Gastrocnemius medialis (tissue), 4 donors: ENCODE measurements at regions of chr12 and their contacts with region 1.

Region 1: GRCh38 chr12:120849765-120850164 is 54.4 kb downstream of the SPPL3 start:
- DNase-seq: peak; percentile 50 to 61
- ATAC-seq: peak; percentile 69 to 84
- H3K4me3 ChIP-seq: no peak overlapping the region
- H3K27ac ChIP-seq: peak overlapping the region; percentile 78 to 89 (median 83)
- H3K4me1 ChIP-seq: peaks cover 79 to 81% of the 10 kb centered on the region in 2 donors
- H3K27me3 ChIP-seq: no peaks in the 10 kb centered on the region
- CTCF ChIP-seq: no peak
- POLR2A ChIP-seq: peak in 1 of 2 donors; percentile 32

Region 2: DNA sequence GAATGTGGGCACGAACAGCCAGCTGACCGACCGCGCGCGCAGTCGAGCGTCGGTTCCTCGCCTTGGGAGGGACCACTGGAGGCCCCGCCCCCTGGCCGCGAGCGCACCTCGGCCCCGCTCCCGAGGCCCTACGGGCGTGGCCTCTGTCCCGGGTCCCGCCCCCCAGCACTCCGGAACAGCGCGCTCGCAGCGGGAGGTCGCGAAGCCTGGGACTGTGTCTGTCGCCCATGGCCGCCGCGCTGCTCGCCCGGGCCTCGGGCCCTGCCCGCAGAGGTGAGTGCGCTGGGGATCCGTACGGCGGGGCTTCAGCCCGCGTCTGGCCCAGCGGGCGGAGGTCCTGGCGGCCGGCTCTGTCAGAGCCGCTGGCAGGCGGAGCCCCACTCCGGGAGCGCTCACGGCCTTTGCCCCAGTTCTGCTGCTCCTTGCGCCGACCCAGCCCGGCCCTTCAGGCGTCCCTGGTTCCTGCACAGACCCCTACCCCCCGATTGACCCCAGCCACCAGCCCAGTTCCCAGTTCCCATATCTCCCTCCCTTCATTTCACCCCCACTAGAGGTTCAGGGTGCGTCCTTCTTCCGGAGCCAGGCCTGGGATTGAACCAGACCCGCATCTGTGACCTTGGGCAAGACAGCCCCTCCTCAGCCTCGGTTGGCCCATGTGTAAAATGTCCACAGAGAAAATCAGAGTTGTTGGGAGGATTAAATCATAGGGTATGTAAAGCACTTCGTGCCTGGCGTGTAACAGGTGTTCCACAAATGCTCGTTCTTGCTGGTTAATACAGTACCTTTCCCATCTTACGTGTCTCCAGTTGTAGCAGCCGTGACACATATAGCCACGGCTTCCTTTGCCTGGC is 123.9 kb before region 1 on chr12 and contains the start of gene ACADS:
- in situ Hi-C with region 1: no loop called
- intact Hi-C with region 1: loop called (anchors 5 kb)
- DNase-seq: peak; percentile 85 to 88
- ATAC-seq: peak; percentile 83 to 89
- H3K4me3 ChIP-seq: peak within 1 kb of the TSS; percentile 78 to 92 (median 86)
- H3K27ac ChIP-seq: peak within 1 kb of the TSS; percentile 92 to 96 (median 94)
- H3K4me1 ChIP-seq: peaks cover 16 to 30% of the 10 kb centered on the region in 2 donors
- H3K27me3 ChIP-seq: no peaks in the 10 kb centered on the region
- CTCF ChIP-seq: peak in 1 of 5 experiments; percentile 25
- POLR2A ChIP-seq: peak; percentile 86 to 88
- total RNA-seq, gene ACADS: 166 to 224 (median 200) TPM

Region 3: GRCh38 chr12:120833849-120834248 is 15.9 kb before region 1 on chr12:
- in situ Hi-C with region 1: no loop called
- intact Hi-C with region 1: loop called (anchors 2 kb)
- DNase-seq: peak; percentile 16 to 38
- ATAC-seq: peak; percentile 94 to 96
- H3K4me3 ChIP-seq: no peak overlapping the region
- H3K27ac ChIP-seq: peak overlapping the region; percentile 78 to 80 (median 78)
- H3K4me1 ChIP-seq: peaks cover 59 to 68% of the 10 kb centered on the region in 2 donors
- H3K27me3 ChIP-seq: no peaks in the 10 kb centered on the region
- CTCF ChIP-seq: no peak
- POLR2A ChIP-seq: no peak

Region 4: GRCh38 chr12:120904197-120904773 is 54.5 kb after region 1 on chr12 and contains the start of gene SPPL3:
- in situ Hi-C with region 1: no loop called
- intact Hi-C with region 1: loop called (anchors 5 kb)
- DNase-seq: peak; percentile 82 to 89
- ATAC-seq: peak; percentile 84 to 85
- H3K4me3 ChIP-seq: peak within 1 kb of the TSS; percentile 89 to 99 (median 96)
- H3K27ac ChIP-seq: peak within 1 kb of the TSS; percentile 91 to 98 (median 94)
- H3K4me1 ChIP-seq: peaks cover 27 to 30% of the 10 kb centered on the region in 2 donors
- H3K27me3 ChIP-seq: no peaks in the 10 kb centered on the region
- CTCF ChIP-seq: peak in 1 of 5 experiments; percentile 33
- POLR2A ChIP-seq: peak; percentile 76 to 86
- total RNA-seq, gene SPPL3: 10.1 to 21.3 (median 10.6) TPM